Activated CD4-positive, alpha-beta T cell treated with anti-CD3 and anti-CD28 coated beads for 36 hours (primary cell): ENCODE measurements at regions of chr16 and their contacts with region 1.

Region 1: GRCh38 chr16:27367461-27368357 is 34.3 kb upstream of the IL21R start:
- DNase-seq: peak; percentile 95
- ATAC-seq: peak; percentile 74
- H3K4me3 Mint-ChIP-seq: peak overlapping the region; percentile 58
- H3K27ac Mint-ChIP-seq: peak overlapping the region; percentile 98
- H3K4me1 Mint-ChIP-seq: peaks cover 79% of the 10 kb centered on the region
- H3K27me3 Mint-ChIP-seq: no peaks in the 10 kb centered on the region

Region 2: DNA sequence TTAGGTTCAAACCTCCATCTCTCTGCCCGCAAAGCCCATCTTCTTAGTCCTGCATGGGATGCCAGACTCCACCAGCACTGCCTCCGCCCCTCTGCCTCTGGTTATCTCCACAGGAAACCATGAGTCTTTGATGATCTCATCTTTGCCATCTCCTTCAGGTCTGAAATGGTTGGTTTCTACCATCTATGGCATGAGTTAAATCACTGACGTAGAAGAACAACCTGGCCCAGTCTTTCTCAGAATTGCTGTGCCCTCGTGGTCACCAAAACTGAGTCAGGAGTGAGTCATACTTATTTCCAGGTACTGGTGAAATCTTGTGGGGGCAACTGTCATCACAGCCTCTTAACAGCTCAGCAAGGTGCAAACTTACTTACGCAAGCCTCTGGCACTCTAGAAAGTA is 769.6 kb before region 1 on chr16:
- CTCF ChIA-PET with region 1: no interaction called
- POLR2A ChIA-PET with region 1: no interaction called
- intact Hi-C with region 1: loop called in 1 of 2 experiments (anchors 1 kb)
- DNase-seq: peak; percentile 83
- ATAC-seq: peak; percentile 91
- H3K4me3 Mint-ChIP-seq: peak overlapping the region; percentile 20
- H3K27ac Mint-ChIP-seq: peak overlapping the region; percentile 82
- H3K4me1 Mint-ChIP-seq: peaks cover 54% of the 10 kb centered on the region
- H3K27me3 Mint-ChIP-seq: peaks cover 19% of the 10 kb centered on the region

Region 3: GRCh38 chr16:27203429-27204231 is 164.1 kb before region 1 on chr16 and contains the start of gene KDM8:
- CTCF ChIA-PET with region 1: interaction called, 11 read pairs
- POLR2A ChIA-PET with region 1: interaction called, 4 read pairs
- intact Hi-C with region 1: loop called in 1 of 2 experiments (anchors 1 kb)
- DNase-seq: peak; percentile 100
- ATAC-seq: peak; percentile 90
- H3K4me3 Mint-ChIP-seq: peak within 1 kb of the TSS; percentile 89
- H3K27ac Mint-ChIP-seq: peak within 1 kb of the TSS; percentile 100
- H3K4me1 Mint-ChIP-seq: peaks cover 47% of the 10 kb centered on the region
- H3K27me3 Mint-ChIP-seq: no peaks in the 10 kb centered on the region
- total RNA-seq, gene KDM8: 9.8 to 10.4 TPM

Region 4: GRCh38 chr16:27273670-27274423 is 93.9 kb before region 1 on chr16:
- CTCF ChIA-PET with region 1: interaction called, 13 read pairs
- POLR2A ChIA-PET with region 1: interaction called, 5 read pairs
- intact Hi-C with region 1: loop called (anchors 1 to 5 kb)
- DNase-seq: peak; percentile 69
- ATAC-seq: peak; percentile 89
- H3K4me3 Mint-ChIP-seq: peak overlapping the region; percentile 35
- H3K27ac Mint-ChIP-seq: peak overlapping the region; percentile 87
- H3K4me1 Mint-ChIP-seq: peaks cover 70% of the 10 kb centered on the region
- H3K27me3 Mint-ChIP-seq: no peaks in the 10 kb centered on the region

Region 5: GRCh38 chr16:27387724-27388123 is 20.0 kb after region 1 on chr16:
- CTCF ChIA-PET with region 1: interaction called, 12 read pairs
- POLR2A ChIA-PET with region 1: interaction called, 4 read pairs
- intact Hi-C with region 1: no loop called
- DNase-seq: no peak
- ATAC-seq: peak; percentile 95
- H3K4me3 Mint-ChIP-seq: no peak overlapping the region
- H3K27ac Mint-ChIP-seq: peak overlapping the region; percentile 7
- H3K4me1 Mint-ChIP-seq: peaks cover 13% of the 10 kb centered on the region
- H3K27me3 Mint-ChIP-seq: no peaks in the 10 kb centered on the region

Region 6: GRCh38 chr16:27455700-27456099 is 88.0 kb after region 1 on chr16:
- CTCF ChIA-PET with region 1: interaction called, 9 read pairs
- POLR2A ChIA-PET with region 1: no interaction called
- intact Hi-C with region 1: loop called (anchors 1 to 2 kb)
- DNase-seq: peak; percentile 58
- ATAC-seq: no peak
- H3K4me3 Mint-ChIP-seq: no peak overlapping the region
- H3K27ac Mint-ChIP-seq: peak overlapping the region; percentile 86
- H3K4me1 Mint-ChIP-seq: peaks cover 58% of the 10 kb centered on the region
- H3K27me3 Mint-ChIP-seq: no peaks in the 10 kb centered on the region